AG04450 (cell line): ENCODE measurements at regions of chr19 and their contacts with region 1.

Region 1: DNA sequence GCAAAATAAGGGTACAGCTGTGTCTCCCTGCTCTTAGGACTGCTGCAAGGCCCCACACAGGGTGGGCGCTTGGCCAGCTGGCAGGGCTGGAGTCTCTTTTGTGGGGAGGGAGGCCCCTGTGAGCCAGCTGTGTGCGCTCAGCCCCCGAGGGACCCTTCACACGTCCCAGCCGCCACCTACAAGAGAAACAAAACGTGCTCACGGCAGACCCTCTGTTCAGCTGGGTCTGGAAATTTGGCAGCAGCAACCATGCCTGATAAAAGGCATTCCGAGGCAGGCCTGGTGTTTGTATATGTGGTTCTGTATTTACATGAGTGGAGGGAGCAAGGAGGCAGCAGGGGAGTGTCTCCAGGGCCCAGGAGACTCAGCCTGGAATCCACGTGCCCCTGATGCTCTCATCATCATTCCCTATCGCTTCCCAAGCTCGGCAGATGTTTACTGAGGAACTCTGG is 49.7 kb downstream of the CRTC1 start:
- DNase-seq: peak; percentile 85
- H3K4me3 ChIP-seq: no peak overlapping the region
- H3K27ac ChIP-seq: peak overlapping the region; percentile 83
- H3K27me3 ChIP-seq: no peaks in the 10 kb centered on the region
- CTCF ChIP-seq: no peak

Region 2: GRCh38 chr19:18612772-18613588 is 120.2 kb before region 1 on chr19 and contains the start of gene TMEM59L:
- CTCF ChIA-PET with region 1: no interaction called
- POLR2A ChIA-PET with region 1: no interaction called
- DNase-seq: no peak
- H3K4me3 ChIP-seq: peak within 1 kb of the TSS; percentile 57
- H3K27ac ChIP-seq: no peak within 1 kb of the TSS
- H3K27me3 ChIP-seq: peaks cover 71% of the 10 kb centered on the region
- CTCF ChIP-seq: no peak
- polyA plus RNA-seq, gene TMEM59L: 0.81 and 1.3 TPM in 2 replicates

Region 3: GRCh38 chr19:18700501-18701249 is 32.5 kb before region 1 on chr19:
- CTCF ChIA-PET with region 1: no interaction called
- POLR2A ChIA-PET with region 1: interaction called, 10 read pairs
- DNase-seq: no peak
- H3K4me3 ChIP-seq: peak overlapping the region; percentile 44
- H3K27ac ChIP-seq: peak overlapping the region; percentile 39
- H3K27me3 ChIP-seq: no peaks in the 10 kb centered on the region
- CTCF ChIP-seq: no peak

Region 4: GRCh38 chr19:18809150-18809868 is 76.1 kb after region 1 on chr19:
- CTCF ChIA-PET with region 1: interaction called, 13 read pairs
- POLR2A ChIA-PET with region 1: no interaction called
- DNase-seq: peak; percentile 38
- H3K4me3 ChIP-seq: no peak overlapping the region
- H3K27ac ChIP-seq: no peak overlapping the region
- H3K27me3 ChIP-seq: peaks cover 16% of the 10 kb centered on the region
- CTCF ChIP-seq: no peak